ENCODE measurements at regions of chr6 and their contacts with region 1.

Region 1: GRCh38 chr6:146850238-146850896 is 251.6 kb downstream of the ADGB start:
- DNase-seq: no peak
- H3K4me3 ChIP-seq: no peak overlapping the region
- H3K27ac ChIP-seq: no peak overlapping the region
- H3K4me1 ChIP-seq: no peaks in the 10 kb centered on the region
- H3K27me3 ChIP-seq: no peaks in the 10 kb centered on the region
- CTCF ChIP-seq: no peak
- POLR2A ChIP-seq: no peak

Region 2: GRCh38 chr6:147000545-147001488 is 150.4 kb after region 1 on chr6:
- intact Hi-C with region 1: no loop called
- DNase-seq: no peak
- H3K4me3 ChIP-seq: no peak overlapping the region
- H3K27ac ChIP-seq: no peak overlapping the region
- H3K4me1 ChIP-seq: no peaks in the 10 kb centered on the region
- H3K27me3 ChIP-seq: no peaks in the 10 kb centered on the region
- CTCF ChIP-seq: no peak
- POLR2A ChIP-seq: no peak

Region 3: DNA sequence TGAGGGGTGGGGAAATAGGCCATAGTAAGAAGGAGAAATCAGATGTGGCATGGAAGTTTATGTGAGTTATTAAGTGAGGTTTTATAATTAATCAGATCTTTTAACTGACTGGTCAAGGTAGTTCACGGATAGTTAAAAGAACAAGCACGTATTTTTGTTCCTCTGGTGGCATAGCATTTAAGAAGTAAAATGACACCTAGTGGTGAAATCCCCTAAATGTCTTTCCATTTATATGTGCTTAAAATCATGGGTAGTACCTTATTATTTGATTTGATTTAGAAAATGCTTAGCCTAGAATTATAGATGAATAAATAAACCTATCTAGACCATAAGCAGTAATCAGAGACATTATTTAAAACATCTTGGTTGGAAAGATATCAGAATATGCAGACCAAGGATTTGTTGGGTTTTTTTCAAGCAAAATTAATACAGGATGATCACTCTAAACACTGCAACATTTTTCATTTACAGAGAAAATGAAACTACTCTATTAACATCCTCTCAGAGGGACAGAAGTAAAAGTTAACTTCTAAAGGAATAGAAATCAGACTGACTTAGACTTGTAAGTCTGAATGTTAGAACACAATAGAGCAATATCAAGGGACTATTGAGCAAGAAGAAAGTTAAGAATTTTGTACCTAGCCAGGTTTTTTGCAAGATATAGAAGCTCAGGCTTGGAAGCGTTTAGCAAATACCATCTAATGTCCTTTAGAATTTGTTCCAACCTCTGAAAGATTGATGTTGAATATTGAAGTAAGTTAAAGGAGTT is 434.9 kb after region 1 on chr6:
- intact Hi-C with region 1: loop called (anchors 5 kb)
- DNase-seq: no peak
- H3K4me3 ChIP-seq: no peak overlapping the region
- H3K27ac ChIP-seq: no peak overlapping the region
- H3K4me1 ChIP-seq: peaks cover 0 to 3% of the 10 kb centered on the region in 2 donors
- H3K27me3 ChIP-seq: no peaks in the 10 kb centered on the region
- CTCF ChIP-seq: peak in 5 of 6 experiments; percentile 22 to 72 (median 55)
- POLR2A ChIP-seq: no peak

Measured in thyroid gland (tissue), 4 donors.